ENCODE measurements at regions of chr3 and their contacts with region 1.

Region 1: GRCh38 chr3:28989646-28990089 is 291.2 kb upstream of the RBMS3 start:
- DNase-seq: no peak
- ATAC-seq: peak; percentile 51
- H3K4me3 ChIP-seq: no peak overlapping the region
- H3K4me3 Mint-ChIP-seq: no peak overlapping the region
- H3K27ac ChIP-seq: no peak overlapping the region
- H3K27ac Mint-ChIP-seq: no peak overlapping the region
- H3K4me1 ChIP-seq: no peaks in the 10 kb centered on the region
- H3K4me1 Mint-ChIP-seq: peaks cover 0 to 7% (median 0%) of the 10 kb centered on the region in 7 donors
- H3K27me3 ChIP-seq: no peaks in the 10 kb centered on the region
- H3K27me3 Mint-ChIP-seq: no peaks in the 10 kb centered on the region

Region 2: GRCh38 chr3:29011441-29011840 is 21.8 kb after region 1 on chr3:
- CTCF ChIA-PET with region 1: no interaction called
- POLR2A ChIA-PET with region 1: no interaction called
- intact Hi-C with region 1: loop called in 1 of 2 experiments (anchors 1 kb)
- DNase-seq: no peak
- ATAC-seq: no peak
- H3K4me3 ChIP-seq: no peak overlapping the region
- H3K4me3 Mint-ChIP-seq: no peak overlapping the region
- H3K27ac ChIP-seq: no peak overlapping the region
- H3K27ac Mint-ChIP-seq: no peak overlapping the region
- H3K4me1 ChIP-seq: no peaks in the 10 kb centered on the region
- H3K4me1 Mint-ChIP-seq: no peaks in the 10 kb centered on the region
- H3K27me3 ChIP-seq: no peaks in the 10 kb centered on the region
- H3K27me3 Mint-ChIP-seq: no peaks in the 10 kb centered on the region

Region 3: GRCh38 chr3:29245441-29245840 is 255.8 kb after region 1 on chr3:
- CTCF ChIA-PET with region 1: no interaction called
- POLR2A ChIA-PET with region 1: no interaction called
- intact Hi-C with region 1: no loop called
- DNase-seq: no peak
- ATAC-seq: no peak
- H3K4me3 ChIP-seq: no peak overlapping the region
- H3K4me3 Mint-ChIP-seq: no peak overlapping the region
- H3K27ac ChIP-seq: no peak overlapping the region
- H3K27ac Mint-ChIP-seq: no peak overlapping the region
- H3K4me1 ChIP-seq: no peaks in the 10 kb centered on the region
- H3K4me1 Mint-ChIP-seq: peaks cover 0 to 2% (median 0%) of the 10 kb centered on the region in 7 donors
- H3K27me3 ChIP-seq: no peaks in the 10 kb centered on the region
- H3K27me3 Mint-ChIP-seq: no peaks in the 10 kb centered on the region